ENCODE measurements at regions of chr6 and their contacts with region 1.

Region 1: DNA sequence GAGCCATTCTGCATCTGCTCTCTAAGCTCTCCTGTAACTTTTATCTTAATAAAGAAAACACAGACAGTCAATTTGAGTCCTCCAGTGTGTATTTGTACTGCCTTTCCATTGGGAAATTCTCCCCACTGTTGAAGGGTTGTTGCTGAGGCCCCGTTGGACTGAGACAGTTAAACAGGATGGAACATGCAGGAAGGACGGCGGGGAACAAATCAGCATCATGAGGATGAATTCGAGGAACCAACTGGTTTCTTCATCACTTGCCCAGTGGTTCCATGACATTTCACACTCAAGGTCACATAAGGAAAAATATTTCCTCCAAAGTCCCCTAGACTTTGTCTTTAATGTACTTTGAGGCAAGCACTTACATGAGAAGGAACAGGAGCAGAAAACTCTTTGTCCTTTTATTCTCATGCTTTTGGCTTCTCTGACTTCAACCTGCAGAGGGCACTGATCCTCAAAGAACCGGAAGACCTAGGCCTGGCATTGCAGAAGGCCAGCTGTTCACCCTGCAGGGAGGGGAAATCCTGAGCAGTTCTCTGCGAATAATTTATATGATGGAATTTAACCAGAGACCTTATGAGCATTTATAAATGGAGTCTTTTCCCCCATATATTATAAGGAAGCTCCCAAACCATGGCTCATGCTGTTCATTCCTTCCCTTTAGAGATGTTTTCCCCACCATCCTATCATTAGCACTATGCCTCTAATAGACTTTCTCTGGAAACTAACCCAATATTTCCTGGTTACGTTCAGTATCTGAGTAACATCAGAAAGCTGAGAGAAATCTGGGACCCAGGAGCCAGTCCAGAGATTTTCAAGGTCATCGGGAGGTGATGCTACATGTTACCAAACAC is 55.2 kb upstream of the ADGRF1 start:
- DNase-seq: peak in 2 of 3 donors; percentile 56 to 78
- ATAC-seq: peak; percentile 82 to 88
- H3K4me3 ChIP-seq: no peak overlapping the region
- H3K27ac ChIP-seq: no peak overlapping the region
- H3K4me1 ChIP-seq: no peaks in the 10 kb centered on the region
- H3K27me3 ChIP-seq: no peaks in the 10 kb centered on the region

Region 2: DNA sequence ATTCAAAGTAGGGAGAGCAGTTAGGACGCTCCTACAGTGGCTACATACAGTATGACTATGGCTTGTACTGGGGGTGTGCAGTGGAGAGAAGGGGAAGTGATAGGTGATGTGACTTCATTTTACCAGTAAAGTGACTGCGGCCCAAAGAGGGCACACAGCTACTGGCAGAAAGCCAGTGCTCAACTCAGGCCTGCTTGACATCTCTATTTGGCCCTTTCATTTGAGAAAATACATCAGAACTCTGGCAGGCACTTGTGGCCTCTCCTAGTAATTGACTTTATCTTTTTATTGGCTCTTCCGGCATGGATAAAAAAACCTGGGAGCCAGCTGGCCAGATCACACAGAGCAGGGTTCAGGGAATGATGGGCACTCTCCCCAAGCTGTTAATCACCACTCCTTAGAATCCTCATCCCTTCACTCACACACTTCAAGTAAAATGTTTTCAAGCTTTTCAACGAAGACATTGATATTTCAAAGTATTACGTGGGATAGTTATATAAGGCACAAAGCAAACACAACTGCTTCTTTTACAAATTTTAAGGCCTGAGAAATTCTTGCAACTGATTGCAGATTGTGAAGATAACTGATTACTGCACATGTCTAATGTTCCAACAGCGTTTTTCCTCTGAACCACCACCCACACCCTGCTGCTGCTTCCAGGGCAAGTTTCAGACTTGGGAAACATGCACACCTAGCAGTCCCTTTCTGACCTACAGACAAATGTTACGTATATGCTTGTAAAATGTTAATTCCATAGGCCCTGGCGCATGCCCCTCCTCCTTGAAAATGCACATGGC is 138.8 kb after region 1 on chr6:
- intact Hi-C with region 1: loop called in 1 of 4 experiments (anchors 5 kb)
- DNase-seq: peak in 2 of 3 donors; percentile 46 to 62
- ATAC-seq: peak; percentile 59 to 82
- H3K4me3 ChIP-seq: no peak overlapping the region
- H3K27ac ChIP-seq: no peak overlapping the region
- H3K4me1 ChIP-seq: peaks cover 3% of the 10 kb centered on the region
- H3K27me3 ChIP-seq: no peaks in the 10 kb centered on the region

Region 3: GRCh38 chr6:47309291-47310130 is 212.2 kb after region 1 on chr6 and contains the start of gene TNFRSF21:
- intact Hi-C with region 1: loop called (anchors 2 to 5 kb)
- DNase-seq: peak; percentile 90 to 96 (median 94)
- ATAC-seq: peak; percentile 99
- H3K4me3 ChIP-seq: peak within 1 kb of the TSS; percentile 66
- H3K27ac ChIP-seq: no peak within 1 kb of the TSS
- H3K4me1 ChIP-seq: no peaks in the 10 kb centered on the region
- H3K27me3 ChIP-seq: no peaks in the 10 kb centered on the region
- total RNA-seq, gene TNFRSF21: 4.5 to 9.1 (median 5.7) TPM

Region 4: GRCh38 chr6:47318236-47318989 is 221.1 kb after region 1 on chr6:
- intact Hi-C with region 1: loop called in 1 of 4 experiments (anchors 5 kb)
- DNase-seq: no peak
- ATAC-seq: no peak
- H3K4me3 ChIP-seq: no peak overlapping the region
- H3K27ac ChIP-seq: no peak overlapping the region
- H3K4me1 ChIP-seq: no peaks in the 10 kb centered on the region
- H3K27me3 ChIP-seq: no peaks in the 10 kb centered on the region

Region 5: GRCh38 chr6:47413752-47414422 is 316.6 kb after region 1 on chr6:
- intact Hi-C with region 1: no loop called
- DNase-seq: peak in 1 of 3 donors; percentile 11
- ATAC-seq: peak; percentile 89 to 90
- H3K4me3 ChIP-seq: peak overlapping the region; percentile 54
- H3K27ac ChIP-seq: no peak overlapping the region
- H3K4me1 ChIP-seq: no peaks in the 10 kb centered on the region
- H3K27me3 ChIP-seq: no peaks in the 10 kb centered on the region

Measured in right cardiac atrium (tissue), 5 donors.